Right ventricle myocardium superior (tissue), 1 donor: ENCODE measurements at regions of chr2 and their contacts with region 1.

Region 1: DNA sequence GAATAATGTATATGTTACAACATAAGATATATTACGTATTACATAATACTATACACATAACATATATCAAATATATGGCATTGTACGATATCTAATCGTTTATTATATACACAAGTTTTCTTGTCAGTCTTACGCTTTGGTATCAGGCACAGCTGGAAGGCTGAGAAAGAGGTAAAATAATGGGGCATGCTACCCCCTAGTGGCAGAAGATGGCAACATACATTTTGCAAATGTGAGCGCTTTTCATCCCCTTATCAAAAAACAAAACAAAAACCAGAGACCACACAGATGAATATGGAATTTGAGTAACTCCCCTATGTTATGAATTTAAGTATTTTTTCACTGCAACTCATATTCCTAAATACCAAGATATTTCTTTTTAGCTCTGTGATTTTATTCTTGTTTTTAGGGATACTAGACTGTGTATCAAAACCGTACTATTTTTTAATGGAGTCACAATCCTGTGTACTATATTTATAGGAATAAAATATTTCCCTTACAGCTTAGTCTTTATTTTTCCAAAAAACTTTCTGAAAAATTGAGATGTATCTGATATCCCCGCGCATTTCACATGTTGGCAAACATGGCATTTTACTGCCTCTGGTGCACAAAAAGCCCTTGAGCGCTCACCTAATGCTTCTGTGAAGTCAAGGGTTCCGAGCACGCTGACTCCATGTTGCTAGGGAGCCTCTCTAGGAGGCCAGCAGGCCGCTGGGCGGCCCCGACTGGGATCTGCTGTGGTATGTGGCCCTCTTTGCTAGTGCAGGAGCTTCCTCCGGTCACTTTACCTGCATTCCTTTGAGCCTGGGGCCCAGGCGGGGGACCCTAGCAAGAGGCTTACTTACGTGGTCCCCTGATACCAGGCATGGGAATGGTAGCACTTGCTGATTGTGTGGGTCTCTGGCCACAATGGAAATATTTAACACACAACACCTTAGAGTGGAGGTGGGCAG is 62.5 kb downstream of the SLC4A3 start:
- DNase-seq: no peak
- ATAC-seq: peak; percentile 78

Region 2: DNA sequence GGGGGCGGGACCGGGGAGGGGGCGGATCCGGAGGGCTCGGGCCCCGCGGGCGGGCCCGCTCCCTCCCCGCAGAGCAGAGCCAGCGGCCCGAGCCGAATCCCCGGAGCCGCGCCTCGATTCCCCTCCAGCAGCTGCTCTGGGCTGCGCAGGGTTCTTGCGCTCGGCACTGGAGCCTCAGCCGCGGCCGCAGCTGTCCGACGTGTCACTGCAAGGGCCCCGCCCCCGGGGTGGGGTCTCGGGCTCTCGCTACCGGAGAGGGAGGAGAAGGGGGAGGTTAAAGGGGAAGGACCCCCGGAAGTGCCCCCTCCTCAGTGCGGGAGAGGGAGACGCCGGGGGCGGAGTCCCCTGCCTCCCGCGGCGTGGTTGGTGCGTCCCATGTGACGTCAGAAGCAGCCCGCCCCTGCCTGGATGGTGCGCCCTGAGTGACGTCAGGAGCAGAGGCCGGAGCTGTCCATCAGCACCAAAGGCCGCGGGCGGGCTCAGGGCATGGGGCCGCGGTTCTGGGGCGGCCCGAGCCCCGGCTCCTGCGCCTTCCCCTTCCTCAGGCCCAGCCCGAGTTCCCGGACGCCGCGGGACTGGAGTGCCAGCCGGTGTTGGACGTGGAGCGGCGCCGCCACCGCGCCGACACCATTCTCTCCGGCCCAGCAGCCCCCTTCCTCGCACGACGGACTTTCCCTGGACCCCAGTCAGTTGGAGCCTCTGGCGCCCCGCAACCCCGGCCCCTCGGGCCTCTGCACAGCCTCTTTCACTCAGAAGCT is 146.2 kb before region 1 on chr2 and contains the starts of genes CHPF and TMEM198:
- intact Hi-C with region 1: loop called (anchors 5 kb)
- DNase-seq: peak; percentile 99
- ATAC-seq: peak; percentile 92
- total RNA-seq, gene CHPF: 85.9 TPM
- total RNA-seq, gene TMEM198: 2.6 TPM